Heart left ventricle (tissue), 16 donors: ENCODE measurements at regions of chr1 and their contacts with region 1.

Region 1: DNA sequence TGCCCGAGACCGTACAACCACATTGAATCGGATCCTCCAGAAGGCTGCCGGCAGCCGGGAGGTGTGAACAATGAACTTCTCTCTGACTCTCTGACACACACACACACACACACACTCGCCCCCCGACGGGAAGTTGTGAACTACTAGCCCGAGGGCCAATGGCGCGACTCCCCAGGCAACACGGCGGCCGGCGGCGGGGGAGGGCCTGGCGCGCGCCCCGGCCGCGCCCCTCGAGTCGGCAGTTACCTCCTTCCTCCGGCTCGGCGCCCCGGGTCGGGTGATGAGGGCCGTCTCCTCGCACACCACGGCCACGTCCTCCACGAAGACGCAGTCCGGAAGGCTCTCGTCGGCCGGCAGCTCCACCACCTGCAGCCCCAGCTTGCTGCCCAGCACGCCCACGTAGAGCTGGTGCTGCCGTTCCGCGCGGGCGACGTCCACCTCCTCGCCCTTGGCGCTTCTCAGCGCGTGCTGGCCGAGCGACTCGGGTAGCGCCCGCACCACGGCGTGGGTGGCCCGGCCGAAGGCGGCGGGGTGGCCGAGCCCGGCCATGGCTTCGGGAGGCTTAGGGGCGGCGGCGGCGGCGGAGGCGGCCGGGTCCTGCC is 361 bp downstream of the DDAH1 start:
- DNase-seq: peak; percentile 76 to 83 (median 79)
- ATAC-seq: peak; percentile 45 to 87 (median 86)
- H3K4me3 ChIP-seq: peak overlapping the region; percentile 3 to 79 (median 70)
- H3K27ac ChIP-seq: peak overlapping the region; percentile 3 to 83 (median 72)
- H3K4me1 ChIP-seq: peaks cover 0 to 22% (median 11%) of the 10 kb centered on the region in 12 donors
- H3K27me3 ChIP-seq: peaks cover 0 to 30% (median 0%) of the 10 kb centered on the region in 9 donors
- CTCF ChIP-seq: no peak
- POLR2A ChIP-seq: peak in 1 of 2 donors; percentile 46

Region 2: DNA sequence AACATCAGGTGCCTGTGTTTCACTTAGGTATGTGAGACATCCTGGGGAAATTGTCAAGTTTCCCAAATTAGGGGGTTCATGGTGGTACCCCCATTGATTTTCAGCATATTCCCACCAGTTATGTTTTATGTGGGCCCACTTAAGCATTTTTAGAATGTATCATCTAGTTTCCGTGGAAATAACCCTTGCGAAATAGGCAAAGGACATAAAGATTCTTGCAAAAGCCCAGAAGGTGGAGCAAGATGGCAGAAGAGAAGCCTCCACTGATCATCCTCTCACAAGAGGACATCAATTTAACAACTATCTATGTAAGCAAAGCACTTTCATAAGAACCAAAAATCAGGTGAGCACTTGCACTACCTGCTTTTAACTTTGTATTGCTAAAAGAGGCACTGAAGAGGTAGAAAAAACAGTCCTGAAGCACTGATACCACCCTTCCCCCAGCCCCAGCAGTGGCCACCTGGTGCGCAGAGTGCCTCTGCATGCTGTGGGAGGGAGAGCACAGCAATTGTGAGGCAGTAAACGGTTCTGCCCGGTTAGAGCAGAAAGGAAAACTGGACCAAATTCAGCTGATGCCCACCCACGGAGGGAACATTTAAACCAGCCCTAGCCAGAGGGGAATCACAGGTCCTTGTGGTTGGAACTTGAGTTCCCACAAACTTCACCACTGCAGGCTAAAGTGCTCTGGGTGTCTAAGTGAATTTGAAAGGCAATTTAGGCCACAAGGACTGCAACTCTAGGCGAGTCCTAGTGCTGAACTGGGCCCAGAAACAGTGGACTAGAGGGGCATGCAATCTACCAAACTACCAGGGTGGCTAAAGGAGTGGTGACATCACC is 490.9 kb before region 1 on chr1:
- intact Hi-C with region 1: no loop called
- DNase-seq: no peak
- ATAC-seq: no peak
- H3K4me3 ChIP-seq: no peak overlapping the region
- H3K27ac ChIP-seq: no peak overlapping the region
- H3K4me1 ChIP-seq: no peaks in the 10 kb centered on the region
- H3K27me3 ChIP-seq: no peaks in the 10 kb centered on the region
- CTCF ChIP-seq: no peak
- POLR2A ChIP-seq: no peak

Region 3: GRCh38 chr1:85447006-85447943 is 17.3 kb before region 1 on chr1:
- intact Hi-C with region 1: loop called in 1 of 10 experiments (anchors 2 kb)
- DNase-seq: no peak
- ATAC-seq: peak in 2 of 4 donors; percentile 13 to 61
- H3K4me3 ChIP-seq: no peak overlapping the region
- H3K27ac ChIP-seq: peak overlapping the region in 8 of 12 donors; percentile 36 to 78 (median 62)
- H3K4me1 ChIP-seq: peaks cover 0 to 27% (median 20%) of the 10 kb centered on the region in 12 donors
- H3K27me3 ChIP-seq: no peaks in the 10 kb centered on the region
- CTCF ChIP-seq: no peak
- POLR2A ChIP-seq: no peak

Region 4: GRCh38 chr1:85746777-85747176 is 282.2 kb after region 1 on chr1:
- intact Hi-C with region 1: no loop called
- DNase-seq: no peak
- ATAC-seq: no peak
- H3K4me3 ChIP-seq: no peak overlapping the region
- H3K27ac ChIP-seq: no peak overlapping the region
- H3K4me1 ChIP-seq: no peaks in the 10 kb centered on the region
- H3K27me3 ChIP-seq: no peaks in the 10 kb centered on the region
- CTCF ChIP-seq: no peak
- POLR2A ChIP-seq: no peak